ENCODE measurements at regions of chr6 and their contacts with region 1.

Region 1: DNA sequence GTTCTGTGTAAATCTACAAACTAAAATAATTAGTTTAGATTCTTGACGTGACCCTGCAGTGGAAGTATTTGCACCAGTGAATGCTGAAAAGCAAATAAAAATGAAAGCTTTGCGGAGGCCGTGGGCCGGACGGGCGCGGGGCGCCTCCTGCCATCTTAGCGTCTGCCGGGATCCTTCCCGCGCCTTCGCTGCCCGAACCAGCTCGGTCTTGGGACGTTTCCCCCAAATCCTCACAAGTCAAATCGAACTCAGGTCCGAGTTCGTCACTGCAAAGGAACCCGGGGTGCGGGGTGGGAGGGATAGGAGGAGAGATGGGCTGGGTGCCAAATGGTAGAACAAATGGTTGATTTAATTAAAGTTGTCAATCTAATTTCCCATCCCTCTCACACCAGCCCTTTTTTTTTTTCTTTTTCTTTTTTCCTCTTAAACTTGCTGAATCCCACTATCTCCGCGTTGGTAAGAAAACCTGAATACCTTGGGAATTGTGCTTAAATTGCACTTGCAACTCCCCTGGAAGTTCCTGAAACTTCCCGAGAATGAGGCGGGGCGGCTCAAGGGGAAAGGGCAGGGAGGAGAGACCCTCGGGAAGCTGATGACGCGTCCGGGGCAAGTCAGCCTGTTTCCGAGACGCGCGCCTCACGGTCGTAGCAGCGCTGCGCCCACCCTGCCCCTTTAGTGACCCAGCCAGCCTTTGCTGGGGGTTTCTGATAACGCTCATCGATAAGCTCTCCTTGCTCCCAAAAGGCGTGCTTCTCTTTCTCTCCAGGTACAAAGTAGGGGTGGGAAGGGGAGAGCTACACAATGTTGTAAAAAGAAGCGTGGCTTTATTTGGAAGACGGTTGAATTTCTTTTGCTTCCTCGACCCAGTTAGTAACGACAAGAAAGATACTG is 1.8 kb downstream of the GJA1 start:
- DNase-seq: peak; percentile 65 to 66
- H3K4me3 ChIP-seq: peak overlapping the region; percentile 52 to 99 (median 68)
- H3K27ac ChIP-seq: peak overlapping the region; percentile 95 to 99 (median 97)
- H3K4me1 ChIP-seq: peaks cover 21 to 25% of the 10 kb centered on the region in 2 donors
- H3K27me3 ChIP-seq: no peaks in the 10 kb centered on the region
- CTCF ChIP-seq: no peak
- POLR2A ChIP-seq: peak in 1 of 2 donors; percentile 19

Region 2: DNA sequence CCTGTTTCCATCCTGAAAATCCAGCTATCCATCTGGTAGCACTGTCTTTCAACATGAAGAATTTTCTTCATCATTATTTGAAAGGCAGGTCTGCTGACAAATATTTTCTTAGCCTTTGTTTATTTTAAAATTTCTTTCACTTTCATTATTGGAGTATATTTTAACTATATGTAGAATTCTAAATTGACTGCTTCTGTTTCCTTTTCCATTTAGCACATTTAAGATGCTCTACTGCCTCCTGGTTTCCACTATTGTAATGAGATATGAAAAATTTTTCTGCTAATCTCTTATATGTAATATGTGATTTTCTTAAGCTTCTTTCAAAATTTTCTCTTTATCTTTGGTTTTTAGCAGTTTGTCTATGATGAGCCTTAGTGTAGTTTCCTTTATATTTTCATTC is 200.2 kb before region 1 on chr6:
- intact Hi-C with region 1: no loop called
- DNase-seq: no peak
- H3K4me3 ChIP-seq: no peak overlapping the region
- H3K27ac ChIP-seq: no peak overlapping the region
- H3K4me1 ChIP-seq: no peaks in the 10 kb centered on the region
- H3K27me3 ChIP-seq: no peaks in the 10 kb centered on the region
- CTCF ChIP-seq: no peak
- POLR2A ChIP-seq: no peak

Region 3: GRCh38 chr6:121506761-121507754 is 69.9 kb after region 1 on chr6:
- intact Hi-C with region 1: loop called (anchors 5 kb)
- DNase-seq: no peak
- H3K4me3 ChIP-seq: no peak overlapping the region
- H3K27ac ChIP-seq: no peak overlapping the region
- H3K4me1 ChIP-seq: peaks cover 6 to 21% of the 10 kb centered on the region in 2 donors
- H3K27me3 ChIP-seq: no peaks in the 10 kb centered on the region
- CTCF ChIP-seq: no peak
- POLR2A ChIP-seq: no peak

Region 4: DNA sequence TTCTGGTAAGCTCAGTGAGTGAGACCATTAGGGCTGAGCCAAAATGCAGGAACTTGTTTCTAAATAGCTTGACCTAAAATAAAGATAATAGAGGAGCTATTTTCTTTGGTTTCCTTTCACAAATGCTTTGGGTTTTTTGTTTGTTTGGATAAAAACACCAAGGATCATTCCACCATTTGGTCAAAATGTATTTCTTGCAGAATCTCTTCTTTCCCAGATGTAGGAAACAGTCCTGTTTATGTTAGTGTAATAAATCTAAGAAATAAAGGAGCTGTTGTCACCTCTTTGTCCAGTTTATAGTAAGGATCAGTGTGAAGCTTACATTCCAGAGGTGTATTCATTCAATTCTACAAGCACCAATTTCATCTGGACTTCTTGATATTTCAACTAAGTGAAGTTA is 296.0 kb after region 1 on chr6:
- intact Hi-C with region 1: no loop called
- DNase-seq: no peak
- H3K4me3 ChIP-seq: no peak overlapping the region
- H3K27ac ChIP-seq: peak overlapping the region in 2 of 3 donors; percentile 1 to 5
- H3K4me1 ChIP-seq: peaks cover 0 to 5% of the 10 kb centered on the region in 2 donors
- H3K27me3 ChIP-seq: no peaks in the 10 kb centered on the region
- CTCF ChIP-seq: no peak
- POLR2A ChIP-seq: no peak

Region 5: GRCh38 chr6:121764493-121764892 is 327.3 kb after region 1 on chr6:
- intact Hi-C with region 1: no loop called
- DNase-seq: no peak
- H3K4me3 ChIP-seq: no peak overlapping the region
- H3K27ac ChIP-seq: no peak overlapping the region
- H3K4me1 ChIP-seq: no peaks in the 10 kb centered on the region
- H3K27me3 ChIP-seq: no peaks in the 10 kb centered on the region
- CTCF ChIP-seq: no peak
- POLR2A ChIP-seq: no peak

Measured in thyroid gland (tissue), 4 donors.